ENCODE measurements at regions of chr12 and their contacts with region 1.

Region 1: DNA sequence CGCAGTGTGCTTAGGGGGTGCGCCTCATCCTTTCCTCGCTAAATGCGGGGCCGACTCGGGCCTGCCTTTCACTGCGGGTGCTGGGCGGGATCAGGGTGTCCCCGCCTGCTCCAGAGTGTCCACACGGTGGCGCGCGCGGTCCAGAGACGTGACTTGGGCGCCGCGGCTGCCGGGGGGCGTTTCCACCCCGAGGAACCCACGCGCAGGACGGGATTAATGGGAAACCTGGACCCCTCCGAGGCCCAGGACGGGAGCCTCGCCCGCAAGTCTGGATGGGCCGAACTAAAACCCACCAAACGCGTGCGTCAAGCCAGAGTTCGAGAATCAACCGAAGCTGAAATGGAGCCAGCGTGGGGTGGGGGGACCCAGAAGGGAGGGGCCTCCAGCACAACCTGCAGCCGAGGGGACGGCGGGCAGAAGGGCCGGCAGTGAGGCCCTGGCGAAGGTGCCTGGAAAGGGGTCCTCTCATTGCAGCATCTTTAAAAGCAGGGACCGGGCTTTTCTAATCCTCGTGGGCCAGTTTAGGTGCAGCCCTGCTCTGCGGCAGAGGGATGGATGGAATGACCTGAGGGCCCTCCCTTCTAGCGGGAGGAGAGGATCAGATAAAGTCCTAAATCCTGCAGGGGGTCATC is 93.3 kb downstream of the NINJ2 start:
- DNase-seq: peak in 1 of 2 donors; percentile 95
- H3K4me3 ChIP-seq: peak overlapping the region; percentile 68 to 77
- H3K27ac ChIP-seq: peak overlapping the region; percentile 93 to 97
- H3K4me1 ChIP-seq: peaks cover 7 to 21% of the 10 kb centered on the region in 2 donors
- H3K27me3 ChIP-seq: no peaks in the 10 kb centered on the region
- CTCF ChIP-seq: peak; percentile 94 to 95 (median 94)

Region 2: GRCh38 chr12:1093166-1093751 is 523.3 kb after region 1 on chr12:
- intact Hi-C with region 1: loop called (anchors 10 kb)
- DNase-seq: no peak
- H3K4me3 ChIP-seq: no peak overlapping the region
- H3K27ac ChIP-seq: no peak overlapping the region
- H3K4me1 ChIP-seq: peaks cover 0 to 3% of the 10 kb centered on the region in 2 donors
- H3K27me3 ChIP-seq: no peaks in the 10 kb centered on the region
- CTCF ChIP-seq: peak; percentile 51 to 82 (median 78)

Measured in ascending aorta (tissue), 2 donors.